ENCODE measurements at regions of chr3 and their contacts with region 1.

Region 1: GRCh38 chr3:53709860-53710674 is 136.2 kb downstream of the CHDH start:
- DNase-seq: peak; percentile 31 to 67
- ATAC-seq: peak; percentile 68 to 87 (median 83)
- H3K4me3 ChIP-seq: no peak overlapping the region
- H3K4me3 Mint-ChIP-seq: no peak overlapping the region
- H3K27ac ChIP-seq: no peak overlapping the region
- H3K27ac Mint-ChIP-seq: no peak overlapping the region
- H3K4me1 ChIP-seq: no peaks in the 10 kb centered on the region
- H3K4me1 Mint-ChIP-seq: peaks cover 4 to 5% of the 10 kb centered on the region in 2 donors
- H3K27me3 ChIP-seq: no peaks in the 10 kb centered on the region
- H3K27me3 Mint-ChIP-seq: no peaks in the 10 kb centered on the region
- CTCF ChIP-seq: peak; percentile 74

Region 2: GRCh38 chr3:53114011-53114400 is 596.1 kb before region 1 on chr3:
- intact Hi-C with region 1: loop called (anchors 5 kb)
- DNase-seq: peak; percentile 69 to 92
- ATAC-seq: peak; percentile 88 to 99 (median 95)
- H3K4me3 ChIP-seq: no peak overlapping the region
- H3K4me3 Mint-ChIP-seq: no peak overlapping the region
- H3K27ac ChIP-seq: no peak overlapping the region
- H3K27ac Mint-ChIP-seq: no peak overlapping the region
- H3K4me1 ChIP-seq: peaks cover 10% of the 10 kb centered on the region
- H3K4me1 Mint-ChIP-seq: no peaks in the 10 kb centered on the region
- H3K27me3 ChIP-seq: no peaks in the 10 kb centered on the region
- H3K27me3 Mint-ChIP-seq: no peaks in the 10 kb centered on the region
- CTCF ChIP-seq: peak; percentile 81

Region 3: GRCh38 chr3:53303957-53304356 is 406.1 kb before region 1 on chr3:
- intact Hi-C with region 1: loop called (anchors 1 kb)
- DNase-seq: no peak
- ATAC-seq: no peak
- H3K4me3 ChIP-seq: no peak overlapping the region
- H3K4me3 Mint-ChIP-seq: no peak overlapping the region
- H3K27ac ChIP-seq: no peak overlapping the region
- H3K27ac Mint-ChIP-seq: peak overlapping the region in 1 of 2 donors; percentile 60
- H3K4me1 ChIP-seq: no peaks in the 10 kb centered on the region
- H3K4me1 Mint-ChIP-seq: no peaks in the 10 kb centered on the region
- H3K27me3 ChIP-seq: no peaks in the 10 kb centered on the region
- H3K27me3 Mint-ChIP-seq: no peaks in the 10 kb centered on the region
- CTCF ChIP-seq: no peak

Region 4: DNA sequence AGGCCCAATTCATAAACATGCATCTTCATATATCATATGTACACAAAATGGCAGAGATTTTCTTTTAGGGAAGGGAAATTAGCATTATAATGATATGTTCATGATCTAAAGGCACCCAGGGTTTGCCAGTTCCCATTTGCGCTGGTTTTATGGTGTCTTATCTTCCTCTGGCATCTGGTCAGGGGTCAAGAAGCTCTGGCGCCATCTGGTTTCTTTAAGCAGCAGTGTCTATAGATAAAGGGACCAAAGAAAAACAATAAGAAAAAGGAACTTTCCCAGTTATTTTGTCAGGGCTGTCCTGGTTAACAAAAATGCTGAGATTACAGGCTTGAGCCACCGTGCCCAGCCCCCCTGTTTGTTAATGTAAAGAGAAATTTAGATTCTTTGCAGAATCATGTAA is 359.4 kb before region 1 on chr3:
- intact Hi-C with region 1: no loop called
- DNase-seq: peak in 1 of 2 donors; percentile 28
- ATAC-seq: no peak
- H3K4me3 ChIP-seq: no peak overlapping the region
- H3K4me3 Mint-ChIP-seq: peak overlapping the region; percentile 75
- H3K27ac ChIP-seq: no peak overlapping the region
- H3K27ac Mint-ChIP-seq: peak overlapping the region in 1 of 2 donors; percentile 14
- H3K4me1 ChIP-seq: peaks cover 16% of the 10 kb centered on the region
- H3K4me1 Mint-ChIP-seq: peaks cover 16 to 19% of the 10 kb centered on the region in 2 donors
- H3K27me3 ChIP-seq: no peaks in the 10 kb centered on the region
- H3K27me3 Mint-ChIP-seq: peaks cover 0 to 2% of the 10 kb centered on the region in 2 donors
- CTCF ChIP-seq: no peak

Region 5: DNA sequence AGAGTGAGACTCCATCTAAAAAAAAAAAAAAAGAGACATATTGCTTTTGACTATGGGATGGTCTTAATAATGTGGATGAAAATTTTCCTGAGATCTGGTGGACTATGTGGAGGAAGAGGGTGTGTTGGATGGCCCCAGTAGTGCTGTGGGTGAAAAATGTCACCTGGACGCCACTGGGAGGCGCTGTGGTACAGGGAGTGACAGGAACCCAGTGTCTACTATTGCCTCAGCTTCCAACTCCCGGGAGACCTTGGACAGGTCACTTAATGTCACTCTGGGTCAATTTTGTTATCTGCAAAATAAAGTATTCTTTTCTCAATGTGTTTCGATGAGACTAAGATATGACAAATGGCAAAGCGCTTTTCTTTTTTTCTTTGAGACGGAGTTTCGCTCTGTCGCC is 335.0 kb before region 1 on chr3:
- intact Hi-C with region 1: loop called (anchors 2 kb)
- DNase-seq: peak; percentile 39 to 59
- ATAC-seq: peak; percentile 60 to 77 (median 68)
- H3K4me3 ChIP-seq: no peak overlapping the region
- H3K4me3 Mint-ChIP-seq: no peak overlapping the region
- H3K27ac ChIP-seq: no peak overlapping the region
- H3K27ac Mint-ChIP-seq: no peak overlapping the region
- H3K4me1 ChIP-seq: no peaks in the 10 kb centered on the region
- H3K4me1 Mint-ChIP-seq: no peaks in the 10 kb centered on the region
- H3K27me3 ChIP-seq: no peaks in the 10 kb centered on the region
- H3K27me3 Mint-ChIP-seq: peaks cover 16 to 19% of the 10 kb centered on the region in 2 donors
- CTCF ChIP-seq: peak; percentile 64

Measured in natural killer cell (primary cell).